Left ventricle myocardium inferior (tissue), 1 donor: ENCODE measurements at regions of chr14 and their contacts with region 1.

Region 1: DNA sequence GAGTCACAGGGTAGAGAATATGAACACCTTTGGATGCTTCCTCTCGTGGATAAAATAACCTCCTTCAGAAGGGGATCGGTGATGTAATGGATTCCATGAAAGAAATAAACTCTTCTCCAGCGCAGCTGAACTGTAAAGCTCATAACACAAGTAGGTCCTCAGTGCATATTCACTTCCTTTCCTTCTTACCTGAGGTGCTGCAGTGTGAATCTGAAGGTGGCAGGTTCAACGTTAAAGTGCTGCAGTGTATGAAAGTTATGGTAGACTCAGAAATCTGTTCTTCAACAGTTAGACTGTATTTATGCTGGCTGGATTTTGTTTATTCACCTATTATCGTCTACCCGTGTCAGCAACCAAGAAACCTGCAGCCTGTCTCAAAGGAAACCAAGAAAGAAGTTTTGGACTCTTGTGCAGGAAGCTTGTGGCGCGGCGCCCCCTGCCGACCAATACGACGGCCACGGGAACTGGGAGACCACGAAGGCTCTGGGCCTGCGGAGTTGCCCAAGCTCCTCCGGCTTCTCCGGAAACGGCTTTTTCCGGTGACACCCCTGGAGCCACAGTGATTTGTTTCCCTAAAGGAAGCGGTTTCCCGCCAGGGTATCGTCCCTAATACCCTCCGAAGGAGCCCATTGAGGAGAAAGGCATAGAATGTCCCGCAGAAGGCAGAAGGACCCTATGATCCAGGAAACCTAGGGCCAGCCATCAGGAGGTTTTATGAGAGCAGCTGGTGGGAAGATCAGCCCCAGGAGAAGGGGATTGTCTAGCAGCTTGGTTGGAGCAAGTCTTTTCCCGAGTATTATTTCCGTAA is 17.6 kb upstream of the RNASE3 start:
- DNase-seq: peak; percentile 87
- H3K4me3 ChIP-seq: peak overlapping the region; percentile 43
- H3K27ac ChIP-seq: peak overlapping the region; percentile 38
- H3K4me1 ChIP-seq: peaks cover 10% of the 10 kb centered on the region
- H3K27me3 ChIP-seq: peaks cover 36% of the 10 kb centered on the region
- CTCF ChIP-seq: peak; percentile 87

Region 2: GRCh38 chr14:20697273-20698017 is 176.1 kb before region 1 on chr14:
- intact Hi-C with region 1: loop called (anchors 5 kb)
- DNase-seq: peak; percentile 39
- H3K4me3 ChIP-seq: no peak overlapping the region
- H3K27ac ChIP-seq: no peak overlapping the region
- H3K4me1 ChIP-seq: peaks cover 5% of the 10 kb centered on the region
- H3K27me3 ChIP-seq: no peaks in the 10 kb centered on the region
- CTCF ChIP-seq: peak; percentile 86

Region 3: DNA sequence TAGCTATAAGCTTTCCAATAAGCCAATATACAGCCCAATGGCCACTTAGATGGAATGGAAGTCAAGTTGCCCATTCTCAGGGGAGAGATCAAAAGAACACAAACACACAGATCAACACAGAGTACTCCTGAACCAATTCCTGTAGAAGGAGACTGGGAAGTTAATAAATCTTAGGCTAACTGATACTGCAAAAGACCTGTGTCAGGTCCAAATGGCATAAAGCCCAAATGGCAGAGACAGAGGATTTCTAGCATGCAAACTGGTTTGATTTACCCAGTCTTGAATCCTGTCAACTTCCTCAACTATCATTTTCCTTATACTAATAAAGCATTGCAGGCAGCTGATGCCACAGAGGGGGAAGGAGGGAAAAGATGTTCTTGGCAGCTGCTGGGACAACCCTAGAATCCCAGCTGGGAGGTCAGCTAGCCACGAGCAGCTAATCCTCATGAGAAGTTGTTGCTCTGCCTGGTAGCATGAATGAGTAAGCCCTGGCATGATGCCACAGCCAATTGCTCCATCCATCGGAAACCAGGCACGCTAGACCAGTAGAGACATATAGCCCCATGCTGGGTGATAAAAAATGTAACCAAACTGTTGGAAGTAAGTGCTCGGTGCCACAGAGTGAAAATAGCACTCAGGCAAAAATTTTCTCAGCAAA is 158.9 kb before region 1 on chr14:
- intact Hi-C with region 1: no loop called
- DNase-seq: peak; percentile 77
- H3K4me3 ChIP-seq: no peak overlapping the region
- H3K27ac ChIP-seq: peak overlapping the region; percentile 44
- H3K4me1 ChIP-seq: no peaks in the 10 kb centered on the region
- H3K27me3 ChIP-seq: peaks cover 19% of the 10 kb centered on the region
- CTCF ChIP-seq: no peak